Activated T-helper 1 cell treated with anti-CD3 and anti-CD28 coated beads, Interleukin-12 subunit alpha, Interleukin-12 subunit beta, Interleukin-2, Interleukin-4 antibody, amounts not matched to agents 30 ng/mL and 10 ng/mL and 1 ng/mL, durations not matched to agents 14 hours and 24 hours and 36 hours (primary cell): ENCODE measurements at regions of chr16 and their contacts with region 1.

Region 1: DNA sequence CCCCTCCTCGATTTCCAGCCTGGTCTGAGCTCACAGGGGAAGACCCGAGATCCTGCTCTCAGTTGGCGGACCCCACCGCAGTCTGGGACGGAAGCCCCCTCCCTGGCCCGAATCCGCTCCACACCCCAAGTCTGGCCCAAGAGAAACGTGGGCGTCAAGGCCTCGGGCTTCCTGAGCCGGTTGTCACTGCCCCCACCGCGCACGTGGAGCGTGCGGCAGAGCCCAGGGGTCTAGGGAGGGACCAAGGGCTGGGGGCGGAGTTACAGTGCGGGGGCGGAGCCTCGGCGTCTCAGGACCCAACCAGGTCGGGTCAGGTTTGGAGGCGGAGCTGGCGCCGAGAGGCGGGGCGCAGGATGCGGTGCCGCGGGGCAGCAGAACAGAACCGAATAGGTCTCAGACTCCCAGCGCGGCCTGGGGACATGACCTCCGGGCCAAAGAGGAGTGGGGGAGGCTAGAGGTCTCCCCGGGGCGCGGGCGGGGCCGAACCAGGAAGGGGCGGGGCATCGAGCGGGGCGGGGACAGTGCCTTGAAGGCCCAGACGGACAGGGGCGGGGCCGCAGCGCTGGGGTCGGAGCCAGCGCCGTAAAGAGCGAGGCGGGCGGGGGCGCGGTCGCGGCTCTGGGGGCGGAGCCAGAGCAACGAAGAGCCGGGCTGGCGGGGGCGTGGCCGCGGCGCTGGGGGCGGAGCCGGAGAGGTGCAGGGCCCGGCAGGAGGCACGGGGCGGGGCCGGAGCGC is 431 bp upstream of the ZFPM1 start:
- DNase-seq: peak; percentile 97
- H3K4me3 Mint-ChIP-seq: peak overlapping the region; percentile 79
- H3K27ac Mint-ChIP-seq: peak overlapping the region; percentile 62
- H3K4me1 Mint-ChIP-seq: peaks cover 27% of the 10 kb centered on the region
- H3K27me3 Mint-ChIP-seq: peaks cover 13% of the 10 kb centered on the region

Region 2: GRCh38 chr16:87778830-87779579 is 673.6 kb before region 1 on chr16:
- intact Hi-C with region 1: loop called (anchors 5 kb)
- DNase-seq: peak; percentile 91
- H3K4me3 Mint-ChIP-seq: peak overlapping the region; percentile 70
- H3K27ac Mint-ChIP-seq: peak overlapping the region; percentile 91
- H3K4me1 Mint-ChIP-seq: peaks cover 51% of the 10 kb centered on the region
- H3K27me3 Mint-ChIP-seq: no peaks in the 10 kb centered on the region

Region 3: GRCh38 chr16:87956365-87957231 is 496.1 kb before region 1 on chr16:
- intact Hi-C with region 1: loop called (anchors 1 kb)
- DNase-seq: peak; percentile 72
- H3K4me3 Mint-ChIP-seq: peak overlapping the region; percentile 78
- H3K27ac Mint-ChIP-seq: peak overlapping the region; percentile 98
- H3K4me1 Mint-ChIP-seq: peaks cover 62% of the 10 kb centered on the region
- H3K27me3 Mint-ChIP-seq: no peaks in the 10 kb centered on the region

Region 4: GRCh38 chr16:88569985-88570690 is 117.5 kb after region 1 on chr16 and contains the start of gene ZC3H18:
- intact Hi-C with region 1: loop called (anchors 1 kb)
- DNase-seq: peak; percentile 96
- H3K4me3 Mint-ChIP-seq: peak within 1 kb of the TSS; percentile 92
- H3K27ac Mint-ChIP-seq: peak within 1 kb of the TSS; percentile 86
- H3K4me1 Mint-ChIP-seq: peaks cover 40% of the 10 kb centered on the region
- H3K27me3 Mint-ChIP-seq: no peaks in the 10 kb centered on the region
- total RNA-seq, gene ZC3H18: 115 and 116 TPM in 2 replicates

Region 5: GRCh38 chr16:88785106-88785924 is 332.7 kb after region 1 on chr16 and contains the start of gene PIEZO1:
- intact Hi-C with region 1: loop called (anchors 10 kb)
- DNase-seq: peak; percentile 80
- H3K4me3 Mint-ChIP-seq: peak within 1 kb of the TSS; percentile 82
- H3K27ac Mint-ChIP-seq: peak within 1 kb of the TSS; percentile 87
- H3K4me1 Mint-ChIP-seq: peaks cover 43% of the 10 kb centered on the region
- H3K27me3 Mint-ChIP-seq: peaks cover 4% of the 10 kb centered on the region
- total RNA-seq, gene PIEZO1: 214 and 217 TPM in 2 replicates